MCF 10A (cell line): ENCODE measurements at regions of chr18 and their contacts with region 1.

Region 1: DNA sequence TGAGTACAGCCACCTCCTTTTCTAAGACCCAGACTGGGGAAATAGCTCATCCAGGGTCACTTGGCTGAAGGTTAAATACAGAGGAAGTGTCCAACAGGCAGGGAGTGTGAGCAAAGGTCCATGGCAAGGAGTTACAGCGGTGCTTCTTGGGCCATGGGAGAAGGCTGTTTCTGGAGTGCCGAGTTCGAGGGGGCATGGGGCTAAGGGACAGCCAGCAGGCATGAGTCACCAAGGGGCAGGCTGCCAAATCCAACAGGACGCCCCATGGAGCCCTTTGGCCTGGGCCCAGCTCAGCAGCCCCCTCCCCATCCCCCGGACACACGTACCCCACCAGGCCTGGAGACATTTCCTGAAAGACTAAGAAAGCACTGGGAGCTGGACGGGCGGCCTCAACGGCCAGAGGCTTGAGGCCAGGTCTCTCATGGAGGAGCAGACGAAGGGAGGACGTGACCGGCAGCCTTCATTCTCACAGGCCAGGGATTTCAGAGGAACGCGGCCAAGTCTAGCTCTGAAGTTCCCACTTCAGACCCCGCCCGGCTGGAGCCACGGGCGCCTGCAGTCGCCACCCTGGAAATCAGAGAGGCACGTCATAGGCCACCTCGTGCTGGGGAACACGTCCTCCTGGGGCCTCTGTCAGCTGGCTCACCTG is 160.4 kb downstream of the SMAD7 start:
- DNase-seq: peak; percentile 11
- H3K4me3 Mint-ChIP-seq: no peak overlapping the region
- H3K27ac Mint-ChIP-seq: no peak overlapping the region
- H3K4me1 Mint-ChIP-seq: no peaks in the 10 kb centered on the region
- H3K27me3 Mint-ChIP-seq: no peaks in the 10 kb centered on the region
- CTCF ChIP-seq: no peak

Region 2: DNA sequence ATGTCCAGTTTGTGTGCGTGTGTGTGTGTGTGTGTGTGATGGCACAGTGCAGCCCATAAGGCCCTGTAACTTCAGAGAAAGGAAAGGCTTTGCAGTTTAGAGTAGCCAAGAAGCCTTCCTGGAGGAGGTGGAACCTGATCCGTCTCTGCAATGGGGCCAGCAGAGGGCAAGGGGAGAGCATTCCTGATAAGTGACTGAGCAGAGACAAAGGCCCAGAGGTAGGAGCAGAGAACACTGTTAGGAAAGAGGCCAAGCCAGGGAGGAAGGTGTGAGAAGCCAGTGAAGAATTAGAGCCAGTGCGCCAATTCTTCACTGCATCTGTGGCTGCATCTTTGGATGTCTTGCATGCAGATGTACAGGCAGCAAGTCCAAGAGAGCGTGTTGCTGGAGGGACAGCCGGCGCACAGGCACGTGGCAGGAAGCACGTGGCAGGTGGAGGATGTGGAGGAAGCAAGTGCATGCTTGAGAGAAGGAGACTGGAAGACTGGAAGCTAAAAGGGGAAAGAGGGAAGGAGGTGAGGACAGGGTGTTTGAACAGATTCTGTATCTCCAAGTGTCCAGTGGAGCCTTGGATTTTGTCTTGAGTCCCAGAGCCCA is 55.2 kb before region 1 on chr18:
- CTCF ChIA-PET with region 1: no interaction called
- POLR2A ChIA-PET with region 1: no interaction called
- intact Hi-C with region 1: loop called (anchors 2 kb)
- DNase-seq: peak; percentile 80
- H3K4me3 Mint-ChIP-seq: no peak overlapping the region
- H3K27ac Mint-ChIP-seq: no peak overlapping the region
- H3K4me1 Mint-ChIP-seq: peaks cover 42% of the 10 kb centered on the region
- H3K27me3 Mint-ChIP-seq: no peaks in the 10 kb centered on the region
- CTCF ChIP-seq: no peak